Activated B cell treated with CpG ODN at 0.5 μM for 24 hours (primary cell): ENCODE measurements at regions of chr1 and their contacts with region 1.

Region 1: GRCh38 chr1:153220606-153221303 is 3.4 kb downstream of the PRR9 start:
- DNase-seq: no peak
- ATAC-seq: no peak
- H3K4me3 Mint-ChIP-seq: no peak overlapping the region
- H3K27ac Mint-ChIP-seq: no peak overlapping the region
- H3K4me1 Mint-ChIP-seq: no peaks in the 10 kb centered on the region
- H3K27me3 Mint-ChIP-seq: peaks cover 25% of the 10 kb centered on the region
- CTCF ChIP-seq: no peak

Region 2: DNA sequence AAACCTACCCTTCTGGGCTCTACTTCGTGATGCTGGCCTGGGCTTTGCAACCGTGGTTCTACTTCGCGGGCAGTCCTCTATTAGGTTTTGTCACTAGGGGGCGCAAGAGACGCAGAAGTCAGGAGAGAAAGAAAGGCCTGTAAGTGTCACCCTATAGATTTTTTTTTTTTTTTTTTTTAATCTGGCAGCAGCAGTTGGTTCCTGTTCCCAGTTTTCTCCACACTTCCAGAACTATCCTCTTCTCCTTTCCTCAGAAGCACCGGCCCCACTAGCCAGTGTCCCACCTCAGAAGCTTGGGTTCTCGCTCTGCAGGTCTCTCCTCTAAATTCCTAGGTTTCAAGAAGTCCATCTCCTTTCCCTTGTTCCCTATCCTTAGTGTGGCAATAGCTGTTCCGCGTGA is 566.6 kb before region 1 on chr1:
- CTCF ChIA-PET with region 1: no interaction called
- POLR2A ChIA-PET with region 1: no interaction called
- intact Hi-C with region 1: loop called (anchors 5 kb)
- DNase-seq: no peak
- ATAC-seq: no peak
- H3K4me3 Mint-ChIP-seq: no peak overlapping the region
- H3K27ac Mint-ChIP-seq: no peak overlapping the region
- H3K4me1 Mint-ChIP-seq: no peaks in the 10 kb centered on the region
- H3K27me3 Mint-ChIP-seq: peaks cover 13% of the 10 kb centered on the region
- CTCF ChIP-seq: no peak

Region 3: DNA sequence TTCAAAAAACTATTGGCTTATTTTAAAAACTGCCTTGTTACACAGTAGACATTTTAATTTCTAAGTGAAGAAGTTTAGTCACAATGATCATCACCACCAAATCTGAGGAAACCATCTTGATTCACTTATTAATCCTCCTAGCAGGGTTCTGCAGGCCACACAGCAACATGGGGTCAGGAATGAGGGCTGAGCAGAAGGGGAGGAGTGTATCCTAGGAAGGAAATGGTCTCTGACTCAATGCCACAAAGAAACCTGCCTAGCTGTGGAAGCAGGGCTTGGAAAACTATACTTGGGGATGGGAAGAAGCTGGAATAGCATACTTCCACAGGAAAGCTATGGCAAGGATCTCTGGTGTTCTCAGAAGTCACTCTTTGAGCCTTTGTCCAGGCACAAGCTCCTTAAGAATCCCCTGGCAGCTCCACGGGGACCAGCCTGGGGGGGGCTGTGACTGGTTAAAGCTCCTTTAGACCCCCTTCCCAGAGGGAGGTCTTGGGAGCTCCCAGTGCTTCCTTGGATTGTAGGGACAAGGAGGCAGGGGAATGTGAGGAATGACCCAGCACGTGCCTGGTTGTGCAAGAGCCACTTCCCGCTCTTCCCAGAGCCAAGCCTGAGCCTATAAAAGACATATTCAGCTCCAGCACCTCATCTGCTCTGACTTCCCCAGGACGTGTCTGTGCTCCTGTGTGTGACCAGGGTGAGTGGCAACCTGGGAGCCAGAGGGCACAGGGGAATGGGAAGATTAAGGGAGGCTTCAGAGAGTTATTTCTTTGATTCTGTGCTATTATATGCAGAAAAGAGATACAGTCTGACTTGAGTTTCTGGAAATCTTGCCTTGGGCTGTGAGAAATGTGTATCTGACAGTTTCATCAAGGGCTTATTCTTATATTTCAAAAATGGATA is 522.8 kb before region 1 on chr1 and contains the start of gene LCE2A:
- CTCF ChIA-PET with region 1: no interaction called
- POLR2A ChIA-PET with region 1: no interaction called
- intact Hi-C with region 1: no loop called
- DNase-seq: no peak
- ATAC-seq: no peak
- H3K4me3 Mint-ChIP-seq: no peak within 1 kb of the TSS
- H3K27ac Mint-ChIP-seq: no peak within 1 kb of the TSS
- H3K4me1 Mint-ChIP-seq: no peaks in the 10 kb centered on the region
- H3K27me3 Mint-ChIP-seq: no peaks in the 10 kb centered on the region
- CTCF ChIP-seq: no peak
- total RNA-seq, gene LCE2A: not detected in 2 replicates

Region 4: DNA sequence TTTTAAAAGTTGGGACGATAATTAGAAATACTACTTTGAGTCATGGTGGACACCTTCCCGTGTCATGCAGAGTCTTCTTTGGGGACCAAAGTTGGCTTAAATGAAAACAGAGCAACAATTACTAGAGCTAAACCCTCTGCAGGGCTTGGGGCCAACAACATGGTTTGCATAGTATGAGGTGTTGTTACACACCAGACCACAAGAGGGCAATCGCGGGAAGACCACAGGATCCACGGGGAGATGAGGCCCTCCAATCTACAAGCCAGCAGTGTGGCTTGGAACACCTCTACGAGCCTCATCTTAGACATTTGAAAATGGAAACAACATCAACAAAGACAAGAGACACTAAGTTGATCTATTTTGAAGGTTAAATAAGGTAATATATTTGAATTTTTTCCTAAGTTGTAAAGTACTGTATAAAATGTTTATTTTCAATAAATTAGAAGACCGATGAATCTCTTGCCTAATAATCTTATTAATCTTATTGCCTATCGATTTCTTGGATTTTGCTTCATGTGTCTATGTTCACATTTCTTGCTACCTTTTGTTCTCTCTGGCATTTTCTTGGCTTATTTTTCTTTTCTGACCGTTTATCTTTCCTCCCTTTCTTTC is 350.8 kb before region 1 on chr1:
- CTCF ChIA-PET with region 1: interaction called, 4 read pairs
- POLR2A ChIA-PET with region 1: no interaction called
- intact Hi-C with region 1: loop called (anchors 1 kb)
- DNase-seq: peak; percentile 34
- ATAC-seq: no peak
- H3K4me3 Mint-ChIP-seq: no peak overlapping the region
- H3K27ac Mint-ChIP-seq: no peak overlapping the region
- H3K4me1 Mint-ChIP-seq: peaks cover 8% of the 10 kb centered on the region
- H3K27me3 Mint-ChIP-seq: no peaks in the 10 kb centered on the region
- CTCF ChIP-seq: peak; percentile 99